Sciatic nerve (tissue), 2 donors: ENCODE measurements at regions of chr17 and their contacts with region 1.

Region 1: DNA sequence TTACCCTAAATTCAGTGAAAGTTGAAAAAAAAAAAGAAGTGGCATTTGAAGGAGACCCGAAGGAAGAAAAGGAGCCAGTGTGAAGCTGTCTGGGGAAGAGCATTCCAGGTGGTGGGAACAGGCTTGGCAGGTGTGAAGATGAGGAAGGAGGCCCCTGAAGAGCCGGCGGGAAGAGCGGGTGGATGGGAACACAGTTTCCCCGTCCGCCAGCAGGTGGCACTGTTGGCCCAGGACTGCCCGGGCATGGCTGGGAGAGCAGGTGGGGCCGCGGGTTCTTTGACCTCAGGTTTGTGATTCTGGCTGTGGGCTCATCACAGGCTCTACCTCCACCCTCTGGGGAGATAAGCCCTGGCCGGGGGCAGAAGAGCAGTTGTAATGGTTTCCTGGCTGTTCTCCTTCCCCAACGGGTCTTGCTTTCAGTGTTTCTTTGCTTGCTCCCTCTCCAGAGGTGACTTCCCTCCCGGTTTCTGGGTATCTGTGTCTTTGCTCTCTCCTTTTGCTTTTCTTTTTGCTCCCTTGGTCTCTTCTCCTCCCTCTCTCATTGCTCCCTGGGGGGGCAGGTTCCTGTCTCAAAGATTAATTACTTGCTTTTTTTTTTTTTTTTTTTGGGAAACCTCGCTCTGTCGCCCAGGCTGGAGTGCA is 32.3 kb downstream of the RAP1GAP2 start:
- DNase-seq: peak; percentile 85
- ATAC-seq: peak; percentile 67

Region 2: DNA sequence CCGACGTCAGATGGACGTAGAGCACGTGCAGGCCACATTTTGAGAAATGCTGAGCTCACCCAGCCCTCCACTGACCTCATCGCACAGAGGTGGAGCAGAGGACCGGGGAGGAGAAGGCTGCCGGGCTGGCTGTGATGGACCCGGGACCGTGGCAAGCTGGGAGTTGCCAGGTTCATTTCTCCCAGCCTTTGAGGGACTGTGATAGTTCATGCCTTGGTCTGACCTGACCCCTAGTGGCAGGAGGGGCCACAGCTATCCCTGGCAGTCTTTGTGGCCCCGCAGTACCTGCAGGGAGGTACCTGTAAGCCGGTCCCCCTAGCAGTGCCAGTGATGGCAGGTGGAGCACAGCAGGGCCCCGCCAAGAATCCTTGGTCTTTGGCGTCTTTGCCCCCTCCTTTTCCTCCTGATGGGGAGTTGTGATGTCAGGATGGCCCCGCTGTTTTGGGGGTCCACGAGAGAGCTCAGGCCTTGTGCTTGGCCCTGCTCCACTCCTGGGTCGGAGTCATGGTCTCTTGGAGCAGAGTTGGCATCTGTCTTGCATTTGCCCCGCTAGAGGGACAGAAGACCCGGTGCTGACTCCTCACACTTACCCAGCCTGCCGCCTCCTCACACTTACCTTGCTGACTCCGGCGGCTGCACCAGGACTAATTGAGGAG is 184.5 kb after region 1 on chr17:
- intact Hi-C with region 1: loop called (anchors 2 kb)
- DNase-seq: peak; percentile 83
- ATAC-seq: peak; percentile 93

Region 3: GRCh38 chr17:3447625-3448024 is 619.1 kb after region 1 on chr17:
- intact Hi-C with region 1: no loop called
- DNase-seq: no peak
- ATAC-seq: no peak